ENCODE measurements at regions of chr19 and their contacts with region 1.

Region 1: DNA sequence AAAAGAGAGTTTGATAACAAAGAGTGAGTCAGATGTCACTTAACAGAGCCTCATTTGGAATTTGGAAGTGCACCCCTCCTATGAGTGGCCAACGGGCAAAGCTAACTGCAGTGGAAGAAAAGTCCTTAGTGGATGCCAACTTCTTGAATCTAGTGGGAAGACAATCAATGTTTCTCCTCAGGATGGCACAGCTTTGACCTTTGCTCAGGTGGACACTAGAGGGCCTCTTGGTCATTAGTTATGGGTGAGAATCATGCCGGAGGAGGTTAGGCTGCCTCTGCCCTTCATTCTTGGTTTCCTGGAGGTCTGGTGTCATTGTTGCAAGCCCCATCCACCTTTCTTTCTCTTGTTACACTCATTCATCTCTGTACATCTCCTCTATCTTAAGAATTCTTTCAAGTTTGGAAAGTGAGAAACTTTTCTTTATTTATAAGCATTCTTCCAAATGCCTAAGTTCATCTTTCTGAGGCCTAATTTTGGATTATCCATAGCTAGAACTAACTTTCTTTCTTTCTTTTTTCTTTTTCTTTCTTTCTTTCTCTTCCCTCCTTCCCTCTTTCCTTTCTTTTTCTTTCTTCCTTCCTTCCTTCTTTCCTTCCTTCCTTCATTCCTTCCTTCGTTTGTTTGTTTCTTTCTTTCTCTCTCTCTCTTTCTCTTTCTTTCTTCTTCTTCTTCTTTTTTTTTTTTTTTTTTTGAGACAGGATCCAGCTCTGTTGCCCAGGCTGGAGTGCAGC is 327.2 kb upstream of the TSHZ3 start:
- DNase-seq: no peak
- H3K4me3 ChIP-seq: no peak overlapping the region
- H3K27ac ChIP-seq: no peak overlapping the region
- H3K4me1 ChIP-seq: no peaks in the 10 kb centered on the region
- H3K27me3 ChIP-seq: no peaks in the 10 kb centered on the region
- CTCF ChIP-seq: peak in 1 of 5 experiments; percentile 14
- EP300 ChIP-seq: no peak
- POLR2A ChIP-seq: no peak

Region 2: GRCh38 chr19:32041681-32042292 is 365.3 kb after region 1 on chr19:
- in situ Hi-C with region 1: loop called in 1 of 4 experiments (anchors 25 kb)
- intact Hi-C with region 1: no loop called
- DNase-seq: peak; percentile 40
- H3K4me3 ChIP-seq: peak overlapping the region in 2 of 4 donors; percentile 11 to 35
- H3K27ac ChIP-seq: no peak overlapping the region
- H3K4me1 ChIP-seq: peaks cover 0 to 5% (median 0%) of the 10 kb centered on the region in 4 donors
- H3K27me3 ChIP-seq: peaks cover 25% of the 10 kb centered on the region
- CTCF ChIP-seq: peak; percentile 69 to 78 (median 74)
- EP300 ChIP-seq: no peak
- POLR2A ChIP-seq: no peak

Region 3: DNA sequence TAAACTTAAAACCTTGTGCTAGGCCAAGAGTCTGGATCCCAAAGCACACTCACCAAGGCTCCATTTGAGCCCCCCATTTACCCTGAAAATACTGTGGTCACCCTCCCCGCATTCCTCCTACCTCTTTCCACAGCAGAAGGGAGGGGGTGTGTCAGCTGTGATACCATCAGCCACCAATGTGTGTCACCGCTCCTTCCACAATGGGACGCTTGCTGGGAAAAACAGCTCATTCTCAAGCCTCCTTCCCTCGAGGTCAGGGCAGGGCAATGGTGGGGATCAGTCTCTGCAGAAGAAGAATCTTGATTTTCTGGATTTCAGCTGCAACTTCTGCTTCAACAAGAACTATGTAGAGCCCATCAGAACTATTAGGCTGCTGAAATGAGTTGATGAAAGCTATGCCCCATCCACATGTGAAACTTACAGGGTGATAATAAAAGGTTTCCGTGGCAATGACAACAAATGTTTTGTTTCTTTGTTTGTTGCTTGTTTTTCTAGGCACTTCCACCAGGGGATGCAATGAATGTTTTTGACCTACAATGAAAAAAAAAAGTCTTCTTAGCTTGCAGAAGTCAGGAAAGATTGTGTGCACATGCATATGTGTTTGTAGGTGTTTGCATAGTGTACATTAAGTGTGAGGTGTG is 642.6 kb after region 1 on chr19:
- in situ Hi-C with region 1: no loop called
- intact Hi-C with region 1: no loop called
- DNase-seq: no peak
- H3K4me3 ChIP-seq: no peak overlapping the region
- H3K27ac ChIP-seq: no peak overlapping the region
- H3K4me1 ChIP-seq: no peaks in the 10 kb centered on the region
- H3K27me3 ChIP-seq: no peaks in the 10 kb centered on the region
- CTCF ChIP-seq: peak in 4 of 5 experiments; percentile 14 to 19 (median 18)
- EP300 ChIP-seq: no peak
- POLR2A ChIP-seq: no peak

Measured in transverse colon (tissue), 4 donors.